Activated T-helper 1 cell treated with anti-CD3 and anti-CD28 coated beads, Interleukin-12 subunit alpha, Interleukin-12 subunit beta, Interleukin-2, Interleukin-4 antibody, amounts not matched to agents 30 ng/mL and 10 ng/mL and 1 ng/mL, durations not matched to agents 14 hours and 24 hours and 36 hours (primary cell): ENCODE measurements at regions of chr2 and their contacts with region 1.

Region 1: DNA sequence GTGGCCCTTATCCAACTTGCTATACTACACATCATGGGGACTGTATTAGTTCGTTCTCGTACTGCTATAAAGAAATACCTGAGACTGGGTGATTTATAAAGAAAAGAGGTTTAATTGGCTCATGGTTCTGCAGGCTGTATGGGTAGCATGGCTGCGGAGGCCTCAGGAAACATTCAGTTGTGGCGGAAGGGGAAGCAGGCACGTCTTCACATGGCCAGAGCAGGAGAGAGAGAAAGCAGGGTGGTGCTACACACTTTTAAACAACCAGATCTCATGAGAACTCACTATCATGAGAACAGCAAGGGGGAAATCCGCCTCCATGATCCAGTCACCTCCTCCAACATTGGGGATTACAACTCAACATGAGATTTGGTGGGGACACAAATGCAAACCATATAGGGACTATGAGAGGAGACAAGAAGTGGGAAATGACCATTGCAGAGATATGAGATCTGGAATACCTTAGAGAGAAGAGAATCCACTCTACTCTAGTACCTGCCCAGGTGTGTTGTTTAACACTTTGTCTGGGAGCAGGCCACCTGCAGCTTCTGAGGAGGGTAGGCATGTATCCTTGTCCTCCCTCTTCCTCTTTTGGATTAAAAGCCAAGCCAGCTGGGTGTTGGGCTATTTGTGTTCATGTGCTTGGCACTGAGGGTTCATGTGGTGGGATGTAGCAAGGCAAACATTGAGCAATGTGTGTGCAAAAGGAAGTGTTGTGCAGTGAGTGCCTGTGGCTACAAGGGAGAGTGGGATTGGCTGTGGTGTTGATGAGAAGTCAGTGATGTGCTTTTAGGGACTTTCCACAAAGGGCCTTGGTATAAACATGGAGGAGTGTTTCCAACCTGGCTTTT is 22.8 kb downstream of the TTLL4 start:
- DNase-seq: peak; percentile 44
- H3K4me3 Mint-ChIP-seq: peak overlapping the region; percentile 15
- H3K27ac Mint-ChIP-seq: peak overlapping the region; percentile 76
- H3K4me1 Mint-ChIP-seq: peaks cover 35% of the 10 kb centered on the region
- H3K27me3 Mint-ChIP-seq: no peaks in the 10 kb centered on the region

Region 2: DNA sequence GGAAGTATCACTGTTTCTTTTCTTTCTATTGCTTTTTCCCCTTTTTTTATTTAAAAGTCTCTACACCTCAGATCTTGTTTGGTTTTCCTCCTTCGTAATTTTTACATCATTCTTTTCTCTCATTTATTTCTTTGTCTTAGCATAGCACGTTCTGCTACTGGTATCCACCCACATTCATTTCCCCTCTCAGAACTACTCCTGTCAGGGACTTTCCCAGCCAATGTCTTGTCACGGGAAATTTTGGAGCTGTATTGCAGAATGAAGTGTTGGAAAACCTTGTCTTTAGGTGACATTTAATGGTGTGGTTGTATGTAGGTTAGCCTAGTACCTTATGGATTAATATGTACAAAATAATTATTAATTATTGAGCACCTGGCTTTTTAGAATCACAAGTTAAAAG is 11.2 kb after region 1 on chr2:
- intact Hi-C with region 1: loop called (anchors 1 kb)
- DNase-seq: no peak
- H3K4me3 Mint-ChIP-seq: peak overlapping the region; percentile 21
- H3K27ac Mint-ChIP-seq: peak overlapping the region; percentile 80
- H3K4me1 Mint-ChIP-seq: peaks cover 30% of the 10 kb centered on the region
- H3K27me3 Mint-ChIP-seq: no peaks in the 10 kb centered on the region